ENCODE measurements at regions of chr17 and their contacts with region 1.

Region 1: GRCh38 chr17:77429919-77430752 is 289.4 kb downstream of the SEC14L1 start:
- DNase-seq: peak; percentile 97 to 98
- H3K4me3 ChIP-seq: no peak overlapping the region
- H3K27ac ChIP-seq: peak overlapping the region; percentile 80 to 83 (median 82)
- H3K4me1 ChIP-seq: peaks cover 34 to 76% of the 10 kb centered on the region in 2 donors
- H3K27me3 ChIP-seq: no peaks in the 10 kb centered on the region
- CTCF ChIP-seq: peak; percentile 47 to 90 (median 83)
- POLR2A ChIP-seq: no peak

Region 2: DNA sequence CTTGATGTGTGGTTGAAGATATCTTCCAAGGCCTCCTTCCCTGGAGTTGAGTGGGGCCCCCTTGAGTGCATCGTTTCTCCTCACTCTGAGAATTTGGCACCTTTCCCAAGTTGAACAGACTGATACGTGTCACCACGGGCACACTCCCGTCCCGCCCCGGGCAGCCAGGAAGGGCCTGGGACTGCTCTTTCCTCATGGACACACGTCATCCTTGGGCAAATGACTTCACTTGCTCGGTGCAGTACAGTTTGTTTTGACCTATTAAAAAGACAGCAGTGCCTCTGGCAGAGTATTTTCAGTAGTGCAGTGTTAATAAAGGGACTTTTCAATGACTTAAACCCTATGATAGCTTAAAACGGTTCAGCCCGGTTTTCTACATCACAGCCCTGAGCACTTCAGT is 229.4 kb before region 1 on chr17:
- intact Hi-C with region 1: no loop called
- DNase-seq: no peak
- H3K4me3 ChIP-seq: no peak overlapping the region
- H3K27ac ChIP-seq: no peak overlapping the region
- H3K4me1 ChIP-seq: no peaks in the 10 kb centered on the region
- H3K27me3 ChIP-seq: no peaks in the 10 kb centered on the region
- CTCF ChIP-seq: no peak
- POLR2A ChIP-seq: no peak

Region 3: DNA sequence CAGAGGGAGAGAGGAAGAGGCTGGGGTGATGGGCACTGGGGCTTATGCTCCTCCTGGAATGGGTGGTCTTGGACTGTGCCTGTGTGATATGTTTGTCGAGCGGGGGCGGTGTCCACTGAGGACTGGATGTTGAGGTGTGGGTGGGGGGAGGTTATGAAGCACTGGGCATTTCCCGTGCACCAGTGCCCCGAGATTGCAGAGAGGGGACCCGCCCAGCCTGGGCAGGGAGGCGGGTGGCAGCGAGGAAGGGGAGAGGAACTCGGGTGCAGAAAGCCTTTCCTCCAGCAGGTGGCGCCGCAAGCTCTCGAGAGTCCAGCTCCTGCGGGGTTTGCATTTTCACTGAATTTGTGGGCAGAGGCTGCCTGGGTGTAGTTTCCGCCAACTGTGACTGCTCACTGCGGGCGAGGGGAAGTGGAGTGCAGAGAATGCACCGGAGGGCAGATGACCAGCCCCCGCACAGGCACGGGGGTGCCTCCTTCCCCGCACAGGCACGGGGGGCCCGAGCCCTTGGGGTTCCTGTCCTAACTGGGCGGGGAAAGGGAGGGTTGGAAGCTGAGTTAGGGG is 98.8 kb before region 1 on chr17:
- intact Hi-C with region 1: loop called (anchors 5 kb)
- DNase-seq: peak; percentile 93 to 94
- H3K4me3 ChIP-seq: no peak overlapping the region
- H3K27ac ChIP-seq: peak overlapping the region; percentile 33 to 70 (median 44)
- H3K4me1 ChIP-seq: peaks cover 30 to 32% of the 10 kb centered on the region in 2 donors
- H3K27me3 ChIP-seq: no peaks in the 10 kb centered on the region
- CTCF ChIP-seq: peak; percentile 74 to 97 (median 94)
- POLR2A ChIP-seq: peak in 1 of 2 donors; percentile 25

Region 4: DNA sequence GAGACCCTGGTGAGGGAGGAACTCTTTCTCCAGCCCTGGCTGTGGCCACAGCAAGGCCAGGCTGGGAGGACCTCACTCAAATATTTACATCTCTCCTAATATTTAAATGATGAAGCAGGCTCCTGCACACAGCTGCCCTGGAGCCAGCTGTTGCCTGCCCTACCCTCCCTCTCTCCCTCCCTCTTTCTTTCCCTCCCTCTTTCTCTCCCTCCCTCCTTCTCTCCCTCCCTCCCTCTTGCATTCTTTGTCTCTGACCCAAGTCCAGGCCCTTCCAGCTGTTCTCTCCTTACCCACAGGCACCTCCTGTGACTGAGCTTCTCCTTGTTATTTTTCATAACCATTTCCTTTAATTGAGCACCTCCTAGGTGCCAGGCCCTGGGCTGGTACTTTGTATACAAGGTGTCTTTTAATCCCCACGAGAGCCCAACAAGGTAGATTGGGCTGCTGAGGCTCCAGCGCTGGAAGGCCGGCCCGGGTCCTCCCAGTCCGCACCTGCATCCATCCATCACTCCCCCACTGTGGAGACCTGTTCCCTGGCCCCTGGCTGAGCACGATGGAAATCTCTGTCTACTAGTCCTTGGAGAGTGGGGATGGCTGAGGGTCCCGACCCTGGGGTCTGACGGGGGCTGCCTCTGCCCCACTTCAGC is 47.0 kb before region 1 on chr17:
- intact Hi-C with region 1: loop called (anchors 5 kb)
- DNase-seq: no peak
- H3K4me3 ChIP-seq: no peak overlapping the region
- H3K27ac ChIP-seq: peak overlapping the region; percentile 76 to 78 (median 76)
- H3K4me1 ChIP-seq: peaks cover 52 to 100% of the 10 kb centered on the region in 2 donors
- H3K27me3 ChIP-seq: no peaks in the 10 kb centered on the region
- CTCF ChIP-seq: no peak
- POLR2A ChIP-seq: no peak